ENCODE measurements at regions of chr16 and their contacts with region 1.

Region 1: GRCh38 chr16:22001591-22001990 is 675 bp upstream of the PDZD9 start:
- DNase-seq: no peak
- H3K4me3 ChIP-seq: no peak overlapping the region
- H3K27ac ChIP-seq: no peak overlapping the region
- H3K4me1 ChIP-seq: peaks cover 15% of the 10 kb centered on the region
- H3K27me3 ChIP-seq: no peaks in the 10 kb centered on the region
- CTCF ChIP-seq: no peak
- POLR2A ChIP-seq: no peak

Region 2: DNA sequence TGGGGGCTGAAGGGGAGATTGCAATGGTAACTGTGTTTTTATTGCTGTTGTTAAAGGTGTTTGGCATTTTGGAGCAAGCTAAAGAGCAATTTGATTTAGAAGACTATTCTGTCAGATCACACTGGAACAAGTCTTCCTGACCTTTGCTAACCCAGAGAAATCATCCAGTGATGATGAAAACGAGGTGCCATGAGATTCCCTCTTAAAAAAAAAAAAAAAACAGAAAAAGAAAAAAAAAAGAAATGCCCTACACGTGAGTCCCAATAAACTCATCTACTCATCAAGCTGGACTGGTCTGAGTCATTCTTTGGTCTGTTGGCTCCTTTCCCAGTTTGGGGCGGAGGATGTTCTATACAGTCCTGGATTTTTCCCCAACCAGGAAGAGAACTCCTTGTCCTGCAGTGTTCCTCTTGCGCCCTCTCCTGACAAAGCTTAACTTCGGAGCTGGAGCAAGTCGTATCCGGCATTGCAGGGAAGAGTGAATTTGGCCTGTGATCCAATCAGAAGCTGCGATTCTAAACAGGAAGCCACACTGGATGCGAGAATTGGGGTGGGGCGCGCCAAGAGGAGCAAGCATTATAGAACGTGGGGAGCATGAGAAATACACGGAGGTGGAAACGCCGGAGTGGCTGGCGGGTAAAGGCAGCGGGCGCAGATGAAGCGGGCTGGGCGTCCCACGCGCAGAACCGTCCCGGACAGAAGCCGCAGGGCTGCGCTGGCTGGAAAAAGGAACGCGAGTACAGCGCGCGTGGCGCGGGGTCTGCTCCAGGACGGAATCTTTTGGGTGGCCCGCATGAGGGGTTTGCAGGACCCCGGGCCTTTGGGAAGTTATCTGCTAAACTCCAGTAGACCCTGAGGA is 701.1 kb before region 1 on chr16:
- intact Hi-C with region 1: no loop called
- DNase-seq: peak in 1 of 2 donors; percentile 100
- H3K4me3 ChIP-seq: peak overlapping the region; percentile 74 to 80
- H3K27ac ChIP-seq: peak overlapping the region; percentile 94
- H3K4me1 ChIP-seq: peaks cover 20% of the 10 kb centered on the region
- H3K27me3 ChIP-seq: no peaks in the 10 kb centered on the region
- CTCF ChIP-seq: peak; percentile 57 to 75 (median 71)
- POLR2A ChIP-seq: peak in 1 of 2 donors; percentile 69

Region 3: DNA sequence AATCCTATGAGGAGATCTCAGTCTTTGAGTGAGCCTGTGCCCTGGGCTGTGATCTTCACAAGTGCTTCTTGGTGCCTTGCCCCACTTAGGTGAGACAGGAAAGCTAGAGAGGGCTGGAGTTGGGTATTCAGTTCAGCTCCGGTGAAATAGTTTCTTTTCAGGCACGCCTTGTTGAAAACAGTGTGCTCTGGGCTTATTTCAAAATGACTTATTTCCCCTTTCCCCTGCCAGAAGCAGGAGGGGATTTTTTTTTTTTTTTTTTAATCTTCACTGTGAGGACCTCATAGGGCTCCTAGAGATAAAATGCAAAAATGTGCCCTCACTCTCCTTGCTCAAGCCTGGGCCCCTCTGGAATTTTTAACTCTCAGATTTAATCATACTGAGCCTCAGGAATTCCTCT is 33.6 kb after region 1 on chr16:
- intact Hi-C with region 1: no loop called
- DNase-seq: no peak
- H3K4me3 ChIP-seq: no peak overlapping the region
- H3K27ac ChIP-seq: no peak overlapping the region
- H3K4me1 ChIP-seq: no peaks in the 10 kb centered on the region
- H3K27me3 ChIP-seq: no peaks in the 10 kb centered on the region
- CTCF ChIP-seq: no peak
- POLR2A ChIP-seq: no peak

Region 4: DNA sequence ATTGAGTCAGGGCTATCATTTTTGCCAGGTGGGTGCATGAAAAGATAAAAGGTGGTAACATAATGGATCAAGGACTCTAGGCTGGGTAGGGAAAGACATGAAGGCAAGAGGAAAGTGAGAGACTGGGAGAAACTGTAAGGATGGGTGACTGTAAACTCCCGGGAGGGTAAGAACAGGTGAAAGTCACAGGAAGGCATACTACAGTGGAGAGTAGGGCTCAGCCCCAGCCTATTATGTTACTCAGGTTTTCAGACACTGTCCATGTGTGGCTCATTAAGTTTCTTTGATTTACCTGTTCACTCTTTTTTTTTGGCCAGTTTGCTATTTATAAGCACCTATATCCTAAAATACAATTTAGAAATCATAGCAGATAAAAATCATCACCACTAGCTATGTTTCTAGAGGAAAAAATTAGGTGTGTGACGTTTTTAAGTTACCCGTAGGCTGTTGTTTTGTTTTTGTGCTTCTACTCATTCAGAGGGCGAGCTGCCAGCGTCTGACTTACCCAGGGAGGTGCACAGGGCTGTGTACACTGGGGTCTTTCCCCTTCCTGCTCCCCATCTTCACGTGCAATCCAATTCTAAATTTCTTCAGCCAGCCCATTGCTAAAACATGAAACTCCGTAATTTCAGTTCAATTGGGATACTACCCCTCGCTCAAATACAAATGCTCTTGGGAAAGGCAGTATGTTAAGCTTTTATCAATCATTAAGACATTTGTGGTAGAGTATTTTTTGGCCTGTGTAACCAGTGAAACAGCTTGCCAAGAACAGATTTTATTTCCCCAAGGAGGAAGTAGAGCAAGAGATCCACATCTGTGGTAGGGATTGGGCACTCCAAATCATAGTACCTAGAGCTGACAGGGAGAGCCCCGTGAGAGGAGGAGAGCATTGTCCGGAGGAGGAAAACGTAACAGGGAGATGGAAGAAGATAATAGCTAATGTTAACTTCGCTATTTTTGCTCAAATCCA is 69.1 kb after region 1 on chr16:
- intact Hi-C with region 1: loop called (anchors 5 kb)
- DNase-seq: no peak
- H3K4me3 ChIP-seq: no peak overlapping the region
- H3K27ac ChIP-seq: peak overlapping the region; percentile 30
- H3K4me1 ChIP-seq: peaks cover 27% of the 10 kb centered on the region
- H3K27me3 ChIP-seq: no peaks in the 10 kb centered on the region
- CTCF ChIP-seq: no peak
- POLR2A ChIP-seq: no peak

Region 5: GRCh38 chr16:22188595-22189442 is 187.2 kb after region 1 on chr16:
- intact Hi-C with region 1: loop called (anchors 5 kb)
- DNase-seq: peak in 1 of 2 donors; percentile 92
- H3K4me3 ChIP-seq: peak overlapping the region; percentile 70 to 85
- H3K27ac ChIP-seq: peak overlapping the region; percentile 97
- H3K4me1 ChIP-seq: peaks cover 42% of the 10 kb centered on the region
- H3K27me3 ChIP-seq: no peaks in the 10 kb centered on the region
- CTCF ChIP-seq: peak; percentile 57 to 85 (median 84)
- POLR2A ChIP-seq: no peak